HEK293T (cell line): ENCODE measurements at regions of chr15 and their contacts with region 1.

Region 1: GRCh38 chr15:66580643-66581042 is 14.8 kb upstream of the LCTL start:
- DNase-seq: no peak

Region 2: DNA sequence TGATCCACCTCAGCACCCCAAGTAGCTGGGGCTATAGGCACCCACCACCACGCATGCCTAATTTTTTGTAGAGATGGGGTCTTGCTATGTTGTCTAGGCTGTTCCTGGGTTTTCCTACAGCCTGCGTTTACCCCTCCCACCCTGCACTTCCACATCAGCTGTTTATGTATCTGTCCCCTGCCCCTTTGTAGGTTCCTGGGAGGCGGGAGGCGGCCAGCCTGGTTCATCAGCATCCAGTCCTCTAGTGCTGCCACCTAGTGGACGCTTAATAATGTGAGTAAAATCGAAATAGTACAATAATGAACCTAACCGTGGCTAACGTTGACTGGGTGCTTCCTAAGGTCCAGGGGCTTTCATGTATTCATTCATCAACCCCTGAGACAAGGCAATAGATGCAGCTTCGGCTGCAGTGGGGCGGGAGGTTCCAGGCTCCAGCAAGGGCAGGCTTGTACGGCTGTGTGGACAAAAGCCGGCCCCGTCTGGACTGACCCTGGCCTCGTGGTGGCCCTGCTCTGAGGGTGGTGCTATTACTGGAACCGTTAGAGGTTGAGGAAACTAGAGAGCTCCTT is 13.6 kb before region 1 on chr15:
- CTCF ChIA-PET with region 1: interaction called, 11 read pairs
- POLR2A ChIA-PET with region 1: interaction called, 3 read pairs
- DNase-seq: peak; percentile 87